ENCODE measurements at regions of chr13 and their contacts with region 1.

Region 1: GRCh38 chr13:26074706-26075105 is 22.9 kb upstream of the SHISA2 start:
- H3K4me3 ChIP-seq: no peak overlapping the region
- H3K27ac ChIP-seq: no peak overlapping the region
- H3K4me1 ChIP-seq: no peaks in the 10 kb centered on the region
- CTCF ChIP-seq: no peak

Region 2: GRCh38 chr13:25827831-25828465 is 246.8 kb before region 1 on chr13:
- CTCF ChIA-PET with region 1: interaction called, 11 read pairs
- POLR2A ChIA-PET with region 1: no interaction called
- H3K4me3 ChIP-seq: no peak overlapping the region
- H3K27ac ChIP-seq: no peak overlapping the region
- H3K4me1 ChIP-seq: no peaks in the 10 kb centered on the region; the same call in 1 of the 2 replicates
- CTCF ChIP-seq: no peak